ENCODE measurements at regions of chr17 and their contacts with region 1.

Region 1: DNA sequence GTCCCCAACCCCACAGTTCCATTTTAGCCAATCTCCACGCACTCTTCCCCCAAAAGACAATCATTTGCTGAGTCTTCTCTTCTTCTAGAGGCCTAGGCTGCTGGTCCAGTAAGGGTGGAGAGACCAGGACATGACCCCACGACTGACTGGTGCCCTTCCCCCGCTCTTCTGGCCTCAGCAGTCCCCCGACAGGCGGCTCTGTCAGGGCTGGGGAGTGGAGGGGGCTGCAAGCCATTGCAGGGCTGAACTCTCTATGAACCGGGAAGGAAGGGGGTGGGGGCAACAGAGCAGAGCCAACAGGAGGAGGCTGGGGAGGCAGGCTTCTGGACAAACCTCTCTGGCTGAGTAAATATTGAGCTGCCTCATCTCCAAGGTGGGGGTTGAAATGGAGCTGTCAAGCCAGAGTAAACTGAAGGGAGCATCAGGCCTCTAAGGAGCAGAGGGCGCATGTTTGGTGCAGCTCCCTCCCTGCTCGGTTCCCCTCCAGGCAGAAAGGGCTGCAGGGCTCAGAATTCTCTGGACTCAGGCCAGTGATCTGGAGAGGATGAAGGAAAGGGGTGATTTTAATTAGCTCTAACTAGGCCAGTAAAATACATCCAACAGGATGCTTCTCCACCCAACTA is 8.7 kb downstream of the HOXB1 start:
- DNase-seq: peak; percentile 83
- ATAC-seq: peak; percentile 58
- H3K4me3 ChIP-seq: no peak overlapping the region
- H3K27ac ChIP-seq: 0 out of 2 replicates have a peak overlapping the region, but pooled peaks have one; percentile 4
- H3K4me1 ChIP-seq: peaks cover 27% of the 10 kb centered on the region
- H3K27me3 ChIP-seq: no peaks in the 10 kb centered on the region
- CTCF ChIP-seq: no peak

Region 2: DNA sequence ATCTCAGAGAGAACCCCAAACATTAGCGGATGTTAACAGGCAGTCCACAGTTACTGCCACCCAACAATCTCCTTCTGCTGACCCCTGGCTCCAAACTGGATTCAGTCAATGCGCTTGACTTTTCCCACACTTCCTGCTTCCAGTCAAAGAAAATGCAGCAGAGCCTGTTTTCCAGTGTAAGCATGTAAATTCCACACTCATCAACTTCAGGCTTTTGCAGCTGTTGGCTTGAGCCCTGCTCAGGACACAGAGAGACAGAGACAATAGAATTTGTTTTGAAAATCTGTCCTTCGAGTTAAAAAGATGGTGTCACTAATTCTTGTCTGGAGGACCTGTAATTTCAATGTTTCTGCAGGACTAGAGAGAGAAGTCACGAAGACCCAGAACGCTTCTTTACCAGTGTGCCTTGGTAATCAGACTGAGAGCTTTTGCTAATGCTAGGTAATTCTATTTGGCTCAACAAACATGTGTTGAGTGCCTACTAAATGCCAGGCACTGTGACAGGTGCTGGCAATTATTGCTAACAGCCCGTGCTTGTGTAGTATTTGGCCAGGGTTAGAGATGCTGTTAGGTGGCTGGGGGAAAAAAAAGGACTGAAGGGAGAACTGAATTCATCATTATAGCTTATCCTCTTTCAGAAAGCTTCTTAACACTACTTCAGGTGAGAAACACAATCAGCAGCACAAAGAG is 23.8 kb before region 1 on chr17:
- CTCF ChIA-PET with region 1: no interaction called
- POLR2A ChIA-PET with region 1: no interaction called
- intact Hi-C with region 1: loop called (anchors 2 kb)
- DNase-seq: peak; percentile 93
- ATAC-seq: peak; percentile 16
- H3K4me3 ChIP-seq: peak overlapping the region; percentile 35
- H3K27ac ChIP-seq: peak overlapping the region; percentile 91
- H3K4me1 ChIP-seq: peaks cover 72% of the 10 kb centered on the region
- H3K27me3 ChIP-seq: no peaks in the 10 kb centered on the region
- CTCF ChIP-seq: no peak